CD14-positive monocyte (primary cell): ENCODE measurements at regions of chr9 and their contacts with region 1.

Region 1: GRCh38 chr9:68999393-69000105 is 14.4 kb downstream of the PRKACG start:
- DNase-seq: peak; percentile 66 to 78 (median 75)
- H3K4me3 ChIP-seq: no peak overlapping the region
- H3K4me3 Mint-ChIP-seq: no peak overlapping the region
- H3K27ac ChIP-seq: no peak overlapping the region
- H3K27ac Mint-ChIP-seq: peak overlapping the region in 1 of 7 donors; percentile 62
- H3K4me1 ChIP-seq: peaks cover 35 to 37% of the 10 kb centered on the region in 2 donors
- H3K4me1 Mint-ChIP-seq: peaks cover 43% of the 10 kb centered on the region
- H3K27me3 ChIP-seq: no peaks in the 10 kb centered on the region
- H3K27me3 Mint-ChIP-seq: peaks cover 0 to 1% (median 0%) of the 10 kb centered on the region in 3 donors
- CTCF ChIP-seq: peak; percentile 85

Region 2: DNA sequence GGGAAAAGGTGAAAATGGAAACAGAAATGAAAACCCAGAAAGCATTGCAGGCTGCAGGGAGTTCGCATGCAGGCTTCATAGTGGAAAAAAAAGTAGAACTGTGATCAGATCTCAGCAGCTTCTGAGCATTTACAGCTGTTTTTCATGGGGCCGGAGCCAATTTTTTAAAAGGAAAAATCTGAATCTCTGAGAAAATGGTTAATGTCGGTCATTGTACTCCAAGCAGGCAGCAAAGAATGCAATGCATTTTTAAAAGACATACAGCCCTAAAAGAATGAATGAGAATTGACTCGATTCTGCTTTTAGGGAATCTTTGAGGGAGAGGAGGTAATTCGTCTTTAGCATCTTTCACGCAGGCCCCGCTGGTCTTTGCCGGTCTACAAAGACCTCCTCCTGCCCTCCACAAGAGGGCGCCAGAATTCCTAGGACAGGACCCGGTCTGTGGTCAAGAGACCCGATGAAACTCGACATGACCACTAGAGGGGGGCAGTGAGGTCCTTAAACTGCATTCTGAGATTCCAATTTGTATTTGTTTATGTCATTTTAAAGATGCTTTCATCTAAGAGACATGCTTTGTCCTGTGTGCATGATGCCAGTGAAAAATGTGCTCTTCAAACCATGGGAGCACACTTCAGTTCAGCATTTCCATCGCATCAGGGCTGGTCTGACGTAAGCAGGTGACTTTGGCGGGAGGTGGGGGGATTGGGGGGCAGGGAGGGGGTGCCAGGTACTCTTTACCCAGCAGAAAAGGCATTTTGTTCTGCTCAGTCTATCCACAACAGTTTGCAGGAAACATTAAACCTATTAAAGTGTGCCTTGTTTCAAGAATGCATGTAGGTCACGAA is 415.1 kb before region 1 on chr9:
- intact Hi-C with region 1: loop called (anchors 2 to 5 kb)
- DNase-seq: peak; percentile 79 to 88 (median 87)
- H3K4me3 ChIP-seq: no peak overlapping the region
- H3K4me3 Mint-ChIP-seq: no peak overlapping the region
- H3K27ac ChIP-seq: no peak overlapping the region
- H3K27ac Mint-ChIP-seq: no peak overlapping the region
- H3K4me1 ChIP-seq: peaks cover 5 to 8% of the 10 kb centered on the region in 2 donors
- H3K4me1 Mint-ChIP-seq: peaks cover 6% of the 10 kb centered on the region
- H3K27me3 ChIP-seq: no peaks in the 10 kb centered on the region
- H3K27me3 Mint-ChIP-seq: peaks cover 0 to 4% (median 2%) of the 10 kb centered on the region in 3 donors
- CTCF ChIP-seq: peak; percentile 98

Region 3: GRCh38 chr9:68704814-68705530 is 294.6 kb before region 1 on chr9 and contains the start of gene PIP5K1B:
- intact Hi-C with region 1: loop called in 1 of 2 experiments (anchors 10 kb)
- DNase-seq: peak; percentile 74 to 78 (median 77)
- H3K4me3 ChIP-seq: peak within 1 kb of the TSS; percentile 73 to 94 (median 90)
- H3K4me3 Mint-ChIP-seq: peak within 1 kb of the TSS; percentile 94 to 96
- H3K27ac ChIP-seq: peak within 1 kb of the TSS in 1 of 2 donors; percentile 62
- H3K27ac Mint-ChIP-seq: peak within 1 kb of the TSS in 6 of 7 donors; percentile 53 to 91 (median 74)
- H3K4me1 ChIP-seq: peaks cover 23 to 34% of the 10 kb centered on the region in 2 donors
- H3K4me1 Mint-ChIP-seq: peaks cover 39% of the 10 kb centered on the region
- H3K27me3 ChIP-seq: peaks cover 13 to 19% of the 10 kb centered on the region in 2 donors
- H3K27me3 Mint-ChIP-seq: peaks cover 29 to 36% (median 34%) of the 10 kb centered on the region in 3 donors
- CTCF ChIP-seq: no peak
- polyA plus RNA-seq, gene PIP5K1B: 0.18 to 4.1 (median 0.87) TPM

Region 4: DNA sequence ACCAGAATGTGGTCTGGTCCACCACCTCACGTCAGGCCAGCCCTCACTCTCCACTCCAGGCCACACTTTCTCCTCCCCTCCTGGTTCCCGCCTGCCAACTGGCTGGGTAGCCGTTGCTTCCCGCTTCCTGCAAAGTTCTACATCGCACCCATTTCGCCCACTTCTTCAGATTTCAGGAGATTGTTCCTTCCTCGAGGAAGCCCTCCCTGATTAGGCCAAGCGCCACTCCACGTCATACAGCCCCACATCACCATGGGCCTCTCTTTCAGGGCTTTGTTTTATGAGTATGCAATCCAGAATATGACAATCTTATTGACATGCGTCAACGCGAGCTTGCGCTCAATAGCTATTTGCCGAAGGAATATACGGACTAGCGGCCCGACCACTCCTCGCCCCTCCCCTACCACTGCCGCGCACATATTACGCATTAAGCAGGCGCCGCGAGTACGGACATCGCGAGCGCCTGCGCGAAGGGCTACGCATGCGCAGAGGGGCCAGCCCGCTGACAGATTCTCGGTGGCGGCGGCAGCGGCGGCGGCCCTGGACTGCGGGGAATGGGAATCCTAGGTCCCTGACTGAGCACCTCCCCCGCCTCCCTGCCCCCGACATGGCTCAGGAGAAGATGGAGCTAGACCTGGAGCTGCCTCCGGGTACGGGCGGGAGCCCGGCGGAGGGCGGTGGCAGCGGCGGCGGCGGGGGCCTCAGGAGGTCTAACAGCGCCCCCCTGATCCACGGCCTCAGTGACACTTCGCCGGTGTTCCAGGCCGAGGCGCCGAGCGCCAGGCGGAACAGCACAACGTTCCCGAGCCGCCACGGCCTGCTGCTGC is 219.8 kb before region 1 on chr9:
- intact Hi-C with region 1: loop called in 1 of 2 experiments (anchors 5 kb)
- DNase-seq: peak; percentile 90 to 96 (median 96)
- H3K4me3 ChIP-seq: peak overlapping the region; percentile 60 to 89 (median 63)
- H3K4me3 Mint-ChIP-seq: no peak overlapping the region
- H3K27ac ChIP-seq: peak overlapping the region; percentile 95 to 100
- H3K27ac Mint-ChIP-seq: no peak overlapping the region
- H3K4me1 ChIP-seq: peaks cover 37 to 46% of the 10 kb centered on the region in 2 donors
- H3K4me1 Mint-ChIP-seq: peaks cover 6% of the 10 kb centered on the region
- H3K27me3 ChIP-seq: no peaks in the 10 kb centered on the region
- H3K27me3 Mint-ChIP-seq: no peaks in the 10 kb centered on the region
- CTCF ChIP-seq: peak; percentile 18

Region 5: DNA sequence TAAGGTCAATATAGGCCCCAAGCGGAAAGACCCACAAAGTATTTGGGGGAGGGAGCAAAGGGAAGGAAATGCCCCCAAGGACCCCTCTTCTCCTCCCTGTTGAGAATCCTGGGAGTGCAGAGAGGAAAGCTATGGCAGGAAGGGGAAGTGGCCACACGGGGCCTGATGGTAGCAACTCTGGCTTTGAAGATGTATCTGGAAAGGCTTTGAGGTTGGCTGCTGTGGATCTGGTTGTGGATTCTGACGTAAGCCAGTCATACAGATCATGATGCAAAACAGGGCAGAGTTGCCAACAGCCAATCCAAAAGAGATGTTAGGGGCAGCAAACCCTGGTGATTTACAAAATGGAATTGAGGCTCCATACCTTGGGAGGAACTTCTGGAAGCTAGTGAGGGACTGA is 94.4 kb before region 1 on chr9:
- intact Hi-C with region 1: loop called in 1 of 2 experiments (anchors 10 kb)
- DNase-seq: no peak
- H3K4me3 ChIP-seq: no peak overlapping the region
- H3K4me3 Mint-ChIP-seq: no peak overlapping the region
- H3K27ac ChIP-seq: no peak overlapping the region
- H3K27ac Mint-ChIP-seq: peak overlapping the region in 1 of 7 donors; percentile 13
- H3K4me1 ChIP-seq: peaks cover 3 to 9% of the 10 kb centered on the region in 2 donors
- H3K4me1 Mint-ChIP-seq: peaks cover 14% of the 10 kb centered on the region
- H3K27me3 ChIP-seq: no peaks in the 10 kb centered on the region
- H3K27me3 Mint-ChIP-seq: no peaks in the 10 kb centered on the region
- CTCF ChIP-seq: no peak

Region 6: GRCh38 chr9:69056191-69056815 is 56.8 kb after region 1 on chr9:
- intact Hi-C with region 1: no loop called
- DNase-seq: no peak
- H3K4me3 ChIP-seq: no peak overlapping the region
- H3K4me3 Mint-ChIP-seq: no peak overlapping the region
- H3K27ac ChIP-seq: no peak overlapping the region
- H3K27ac Mint-ChIP-seq: peak overlapping the region in 1 of 7 donors; percentile 79
- H3K4me1 ChIP-seq: no peaks in the 10 kb centered on the region
- H3K4me1 Mint-ChIP-seq: no peaks in the 10 kb centered on the region
- H3K27me3 ChIP-seq: no peaks in the 10 kb centered on the region
- H3K27me3 Mint-ChIP-seq: peaks cover 0 to 1% (median 0%) of the 10 kb centered on the region in 3 donors
- CTCF ChIP-seq: no peak